Dendritic cell treated with granulocyte-macrophage colony-stimulating factor and Interleukin-4, amounts not matched to agents 40 ng/mL and 50 ng/mL, for 4 days (primary cell): ENCODE measurements at regions of chrX and their contacts with region 1.

Region 1: DNA sequence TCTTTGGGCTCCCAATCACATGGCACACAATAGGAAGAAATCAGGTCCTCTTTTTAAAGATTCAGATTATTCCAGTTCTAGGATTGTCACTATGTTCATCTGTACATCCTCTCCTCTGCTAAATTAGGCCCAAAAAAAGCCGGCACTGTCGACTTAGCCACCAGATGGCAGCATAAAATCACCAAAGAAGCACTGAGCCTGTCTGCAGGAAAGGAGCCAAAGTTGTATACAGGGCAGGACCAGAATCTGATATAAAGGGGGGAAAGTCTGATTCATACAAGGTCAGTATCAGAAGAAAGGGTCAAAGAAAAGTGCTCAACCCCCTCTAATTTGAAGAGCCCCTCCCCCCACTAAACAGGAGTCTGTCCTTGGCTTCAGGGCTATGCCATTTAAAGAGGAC is 292.5 kb downstream of the CHIC1 start:
- H3K4me3 Mint-ChIP-seq: no peak overlapping the region
- H3K27ac Mint-ChIP-seq: no peak overlapping the region
- H3K4me1 Mint-ChIP-seq: no peaks in the 10 kb centered on the region
- H3K27me3 Mint-ChIP-seq: no peaks in the 10 kb centered on the region

Region 2: GRCh38 chrX:73841337-73841736 is 14.2 kb before region 1 on chrX:
- intact Hi-C with region 1: no loop called
- H3K4me3 Mint-ChIP-seq: no peak overlapping the region
- H3K27ac Mint-ChIP-seq: no peak overlapping the region
- H3K4me1 Mint-ChIP-seq: no peaks in the 10 kb centered on the region
- H3K27me3 Mint-ChIP-seq: no peaks in the 10 kb centered on the region

Region 3: DNA sequence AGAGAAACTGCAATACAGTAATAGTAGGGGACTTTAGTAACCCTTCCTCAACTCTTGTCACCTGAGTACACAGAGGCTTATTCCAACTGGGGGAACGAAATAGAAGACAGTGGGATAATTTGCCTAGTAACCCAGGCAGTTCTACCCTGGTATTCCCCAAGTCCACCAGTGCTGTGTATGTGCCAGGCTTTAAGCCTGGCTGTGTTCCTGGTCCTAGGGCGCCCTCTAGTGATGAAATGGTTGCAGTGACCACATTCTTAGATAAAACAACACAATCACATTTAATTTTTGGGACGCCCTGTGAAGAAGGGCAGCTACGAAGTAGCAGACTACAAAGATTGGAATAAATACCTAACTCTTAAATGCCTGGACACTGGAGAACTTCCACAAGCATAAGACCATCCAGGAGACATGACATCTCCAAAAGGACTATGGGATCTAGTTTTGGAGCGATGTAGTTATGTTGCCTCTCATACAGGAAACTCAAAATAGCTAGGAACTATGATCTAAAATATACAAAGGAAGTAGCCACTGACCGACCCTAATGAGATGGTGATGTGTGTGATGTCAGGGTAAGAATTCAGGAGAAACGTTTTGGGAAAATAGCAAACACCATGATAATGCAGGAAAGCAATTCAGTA is 160.0 kb after region 1 on chrX:
- intact Hi-C with region 1: loop called (anchors 1 kb)
- H3K4me3 Mint-ChIP-seq: no peak overlapping the region
- H3K27ac Mint-ChIP-seq: no peak overlapping the region
- H3K4me1 Mint-ChIP-seq: no peaks in the 10 kb centered on the region
- H3K27me3 Mint-ChIP-seq: no peaks in the 10 kb centered on the region

Region 4: DNA sequence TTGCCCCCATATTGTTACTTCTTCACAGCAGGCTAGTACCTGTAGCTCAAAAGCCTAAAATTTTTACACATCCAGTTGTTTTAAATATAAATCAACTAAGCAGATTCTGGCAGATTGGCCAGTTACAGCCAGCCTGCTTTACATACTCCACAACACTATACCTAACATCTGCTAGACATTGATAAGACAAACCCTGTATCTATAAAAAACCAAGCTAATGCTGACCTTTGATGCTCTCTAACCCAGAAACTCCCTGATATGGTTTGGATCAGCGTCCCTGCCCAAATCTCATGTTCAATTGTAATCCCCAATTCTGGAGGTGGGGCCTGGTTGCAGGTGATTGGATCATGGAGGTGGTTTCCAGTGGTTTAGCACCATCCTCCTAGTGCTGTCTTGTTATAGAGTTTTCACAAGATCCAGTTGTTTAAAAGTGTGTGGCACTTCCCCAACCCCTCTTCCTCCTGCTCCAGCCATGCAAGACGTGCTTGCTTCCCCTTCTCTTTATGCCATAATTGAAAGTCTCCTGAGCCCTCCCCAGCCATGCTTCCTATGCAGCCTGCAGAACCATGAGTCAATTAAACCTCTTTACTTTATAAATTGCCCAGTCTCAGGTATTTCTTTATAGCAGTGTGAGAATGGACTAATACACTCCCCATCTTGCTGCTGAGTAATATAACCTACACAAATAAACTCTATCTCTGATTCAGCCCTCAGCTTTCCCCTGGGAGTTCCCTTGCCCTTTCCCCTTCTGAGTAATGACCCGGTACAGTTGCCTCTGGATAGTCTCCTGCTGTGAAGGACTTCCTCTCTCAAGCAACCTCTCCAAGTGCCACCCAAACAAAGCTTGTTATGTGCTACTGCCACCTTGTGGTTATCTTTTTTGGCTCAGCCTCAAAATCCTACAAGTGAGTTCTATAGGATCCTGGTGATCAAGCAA is 488.1 kb after region 1 on chrX:
- intact Hi-C with region 1: loop called (anchors 5 kb)
- H3K4me3 Mint-ChIP-seq: peak overlapping the region; percentile 32
- H3K27ac Mint-ChIP-seq: peak overlapping the region; percentile 85
- H3K4me1 Mint-ChIP-seq: peaks cover 15% of the 10 kb centered on the region
- H3K27me3 Mint-ChIP-seq: no peaks in the 10 kb centered on the region

Region 5: GRCh38 chrX:74550295-74550802 is 694.8 kb after region 1 on chrX:
- intact Hi-C with region 1: loop called (anchors 5 kb)
- H3K4me3 Mint-ChIP-seq: peak overlapping the region; percentile 17
- H3K27ac Mint-ChIP-seq: no peak overlapping the region
- H3K4me1 Mint-ChIP-seq: no peaks in the 10 kb centered on the region
- H3K27me3 Mint-ChIP-seq: no peaks in the 10 kb centered on the region